Left lung (tissue), 14 donors: ENCODE measurements at regions of chr11 and their contacts with region 1.

Region 1: GRCh38 chr11:75142714-75143419 is 8.0 kb upstream of the SLCO2B1 start:
- DNase-seq: peak in 2 of 4 donors; percentile 85 to 89
- ATAC-seq: peak; percentile 84
- H3K4me3 ChIP-seq: no peak overlapping the region
- H3K27ac ChIP-seq: peak overlapping the region; percentile 59 to 70
- H3K4me1 ChIP-seq: peaks cover 8 to 53% of the 10 kb centered on the region in 2 donors
- H3K27me3 ChIP-seq: peaks cover 0 to 21% of the 10 kb centered on the region in 2 donors
- CTCF ChIP-seq: peak in 1 of 2 donors; percentile 23

Region 2: GRCh38 chr11:74185695-74186094 is 957.2 kb before region 1 on chr11:
- intact Hi-C with region 1: no loop called
- DNase-seq: no peak
- ATAC-seq: peak; percentile 77
- H3K4me3 ChIP-seq: no peak overlapping the region
- H3K27ac ChIP-seq: no peak overlapping the region
- H3K4me1 ChIP-seq: no peaks in the 10 kb centered on the region
- H3K27me3 ChIP-seq: no peaks in the 10 kb centered on the region
- CTCF ChIP-seq: no peak

Region 3: DNA sequence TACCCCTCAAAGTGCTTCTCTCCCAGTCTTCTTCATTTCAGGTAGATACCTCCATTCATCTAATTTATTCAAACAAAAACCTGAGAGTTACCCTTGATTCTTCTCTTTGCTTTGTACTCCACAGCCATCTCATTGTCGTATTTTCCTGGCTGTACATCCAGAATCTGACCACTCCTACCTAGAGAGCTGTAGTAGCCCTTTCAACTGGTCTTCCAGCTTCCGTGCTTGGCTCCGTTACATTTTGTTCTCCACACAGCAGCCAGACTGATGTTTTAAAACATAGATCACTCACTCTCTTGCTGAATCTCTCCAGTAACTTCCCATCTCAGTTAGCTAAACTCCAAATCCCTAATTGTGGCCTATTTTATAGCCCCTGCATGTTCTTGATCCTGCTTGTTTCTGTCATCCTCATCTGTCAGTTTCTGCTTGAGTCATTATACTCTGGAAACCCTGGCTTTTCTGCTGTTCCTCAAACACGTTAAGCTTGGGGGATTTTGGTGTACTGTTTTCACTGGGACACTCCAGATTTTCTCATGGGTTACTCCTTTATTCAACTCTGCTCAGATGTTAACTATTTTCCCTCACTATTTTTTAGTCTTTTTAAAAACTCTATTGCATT is 186.4 kb before region 1 on chr11:
- intact Hi-C with region 1: no loop called
- DNase-seq: no peak
- ATAC-seq: no peak
- H3K4me3 ChIP-seq: no peak overlapping the region
- H3K27ac ChIP-seq: no peak overlapping the region
- H3K4me1 ChIP-seq: peaks cover 12 to 60% of the 10 kb centered on the region in 2 donors
- H3K27me3 ChIP-seq: no peaks in the 10 kb centered on the region
- CTCF ChIP-seq: no peak

Region 4: GRCh38 chr11:75195121-75195551 is 52.3 kb after region 1 on chr11:
- intact Hi-C with region 1: loop called (anchors 5 to 10 kb)
- DNase-seq: peak in 2 of 4 donors; percentile 11 to 78
- ATAC-seq: peak; percentile 73
- H3K4me3 ChIP-seq: no peak overlapping the region
- H3K27ac ChIP-seq: peak overlapping the region in 1 of 2 donors; percentile 37
- H3K4me1 ChIP-seq: peaks cover 7 to 57% of the 10 kb centered on the region in 2 donors
- H3K27me3 ChIP-seq: no peaks in the 10 kb centered on the region
- CTCF ChIP-seq: no peak

Region 5: GRCh38 chr11:75328426-75329277 is 185.8 kb after region 1 on chr11:
- intact Hi-C with region 1: no loop called
- DNase-seq: peak in 2 of 4 donors; percentile 85 to 89
- ATAC-seq: peak; percentile 92
- H3K4me3 ChIP-seq: no peak overlapping the region
- H3K27ac ChIP-seq: peak overlapping the region; percentile 69 to 70
- H3K4me1 ChIP-seq: peaks cover 32 to 84% of the 10 kb centered on the region in 2 donors
- H3K27me3 ChIP-seq: no peaks in the 10 kb centered on the region
- CTCF ChIP-seq: peak; percentile 60 to 61

Region 6: GRCh38 chr11:75525596-75526541 is 383.0 kb after region 1 on chr11 and contains the start of gene GDPD5:
- intact Hi-C with region 1: no loop called
- DNase-seq: peak; percentile 86 to 94 (median 90)
- ATAC-seq: peak; percentile 99
- H3K4me3 ChIP-seq: peak within 1 kb of the TSS; percentile 48 to 63
- H3K27ac ChIP-seq: peak within 1 kb of the TSS in 1 of 2 donors; percentile 8
- H3K4me1 ChIP-seq: peaks cover 11 to 24% of the 10 kb centered on the region in 2 donors
- H3K27me3 ChIP-seq: peaks cover 0 to 30% of the 10 kb centered on the region in 2 donors
- CTCF ChIP-seq: peak; percentile 28 to 53
- polyA plus RNA-seq, gene GDPD5: 24.0 to 34.8 (median 28.4) TPM